ENCODE measurements at regions of chr15 and their contacts with region 1.

Region 1: DNA sequence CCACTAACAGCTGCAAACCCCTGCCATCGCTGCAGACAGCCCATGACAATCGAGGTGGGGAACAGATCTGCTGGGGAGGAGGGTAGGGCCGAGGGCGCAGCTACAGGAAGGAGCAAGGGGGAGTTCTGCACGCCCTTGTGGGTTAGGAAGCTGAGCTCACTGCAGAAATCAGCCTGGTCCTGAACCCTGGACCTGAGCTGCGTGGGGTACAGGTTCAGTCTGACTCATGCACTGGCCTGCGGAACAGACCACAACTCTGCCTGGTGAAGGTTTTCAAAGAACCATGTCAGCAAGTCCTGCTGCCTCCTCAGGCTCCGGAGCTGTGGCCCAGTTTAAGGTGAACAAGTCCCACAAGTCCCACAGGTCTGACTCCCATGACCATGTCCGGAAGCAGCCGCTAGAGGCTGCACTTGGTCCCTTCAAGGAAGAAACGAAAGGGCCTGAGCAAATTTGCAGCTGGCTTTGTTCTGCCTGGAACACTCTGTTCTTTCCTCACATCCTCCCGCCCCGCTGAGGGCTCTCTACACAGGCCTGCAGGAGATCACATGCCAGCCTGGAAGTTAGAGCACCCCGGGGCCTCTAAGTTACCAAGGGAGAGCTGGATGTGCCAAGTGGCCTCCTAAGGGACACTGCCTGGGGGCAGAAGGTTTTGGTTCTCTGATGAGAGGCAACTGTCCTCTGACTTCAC is 49.4 kb upstream of the AKAP13 start:
- DNase-seq: peak; percentile 87 to 96 (median 90)
- ATAC-seq: peak; percentile 94 to 96 (median 95)
- H3K4me3 ChIP-seq: peak overlapping the region in 5 of 12 donors; percentile 8 to 53 (median 16)
- H3K27ac ChIP-seq: peak overlapping the region; percentile 84 to 97 (median 92)
- H3K4me1 ChIP-seq: peaks cover 4 to 66% (median 38%) of the 10 kb centered on the region in 12 donors
- H3K27me3 ChIP-seq: no peaks in the 10 kb centered on the region
- CTCF ChIP-seq: peak; percentile 57 to 93 (median 83)
- POLR2A ChIP-seq: peak in 1 of 2 donors; percentile 52

Region 2: DNA sequence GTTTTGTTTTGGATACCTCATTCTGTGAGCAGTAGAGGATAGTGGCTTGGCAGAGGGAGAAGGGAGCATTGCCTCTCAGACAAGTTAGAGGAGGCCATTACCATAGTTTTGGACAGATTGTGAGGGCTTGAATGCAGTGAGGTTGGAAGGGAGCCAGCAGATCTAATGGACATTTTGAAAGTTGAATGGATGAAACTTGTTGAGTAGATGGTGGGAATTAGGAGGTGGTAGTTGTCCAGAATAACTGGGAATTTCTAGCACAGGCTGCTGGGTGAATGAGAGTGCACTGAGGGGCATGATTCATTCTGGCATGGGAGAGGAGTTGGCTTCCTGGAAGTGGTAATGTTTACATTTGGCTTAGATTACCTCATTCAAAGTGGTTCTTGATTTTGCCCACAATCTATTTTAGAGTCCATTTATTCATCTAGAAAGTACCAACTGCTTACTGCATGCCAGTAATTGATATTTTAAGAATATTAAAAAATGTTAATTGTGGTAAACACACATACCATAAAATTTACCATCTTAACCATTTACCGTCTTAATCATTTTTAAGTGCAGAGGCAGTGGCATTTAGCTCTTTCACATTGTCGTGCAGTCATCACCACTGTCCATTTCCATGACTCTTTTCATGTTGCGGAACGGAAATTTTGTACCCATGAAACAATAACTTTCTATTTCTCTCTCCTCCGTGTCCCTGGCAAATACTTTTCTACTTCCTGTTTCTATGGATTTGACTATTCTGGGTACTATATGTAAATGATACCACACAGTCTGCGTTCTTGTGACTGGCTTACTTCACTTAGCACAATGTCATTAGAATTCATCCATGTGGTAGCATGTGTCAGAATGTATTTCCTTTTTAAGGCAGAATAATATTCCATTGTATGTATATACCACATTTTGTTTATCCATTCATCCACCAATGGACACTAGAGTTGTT is 77.0 kb after region 1 on chr15:
- intact Hi-C with region 1: loop called in 4 of 10 experiments (anchors 2 to 10 kb)
- DNase-seq: peak in 1 of 5 donors; percentile 15
- ATAC-seq: peak in 3 of 4 donors; percentile 50 to 66 (median 57)
- H3K4me3 ChIP-seq: peak overlapping the region in 1 of 12 donors; percentile 16
- H3K27ac ChIP-seq: peak overlapping the region in 9 of 12 donors; percentile 15 to 86 (median 36)
- H3K4me1 ChIP-seq: peaks cover 0 to 82% (median 64%) of the 10 kb centered on the region in 12 donors
- H3K27me3 ChIP-seq: no peaks in the 10 kb centered on the region
- CTCF ChIP-seq: no peak
- POLR2A ChIP-seq: no peak

Region 3: DNA sequence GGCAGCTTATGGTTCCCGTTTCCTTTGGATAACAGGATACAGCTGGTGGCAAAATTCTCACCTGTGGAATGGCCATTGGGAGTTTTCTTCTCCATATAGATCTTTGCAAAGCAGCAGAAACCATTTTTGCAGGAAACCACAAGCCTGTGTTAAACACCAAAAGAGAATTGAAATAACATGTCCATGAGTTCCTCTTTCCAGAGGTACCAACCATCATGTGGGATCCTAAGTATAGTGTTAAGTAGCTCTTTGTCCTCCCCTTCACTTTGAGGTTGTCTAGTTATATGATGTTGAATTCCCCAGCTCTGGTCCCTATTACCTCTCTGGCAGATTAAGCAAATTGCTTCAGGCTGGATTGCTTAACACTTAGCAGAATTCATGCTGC is 144.3 kb after region 1 on chr15:
- intact Hi-C with region 1: loop called in 3 of 10 experiments (anchors 5 to 10 kb)
- DNase-seq: no peak
- ATAC-seq: peak in 1 of 4 donors; percentile 8
- H3K4me3 ChIP-seq: no peak overlapping the region
- H3K27ac ChIP-seq: no peak overlapping the region
- H3K4me1 ChIP-seq: peaks cover 3 to 88% (median 71%) of the 10 kb centered on the region in 12 donors
- H3K27me3 ChIP-seq: no peaks in the 10 kb centered on the region
- CTCF ChIP-seq: no peak
- POLR2A ChIP-seq: no peak

Region 4: DNA sequence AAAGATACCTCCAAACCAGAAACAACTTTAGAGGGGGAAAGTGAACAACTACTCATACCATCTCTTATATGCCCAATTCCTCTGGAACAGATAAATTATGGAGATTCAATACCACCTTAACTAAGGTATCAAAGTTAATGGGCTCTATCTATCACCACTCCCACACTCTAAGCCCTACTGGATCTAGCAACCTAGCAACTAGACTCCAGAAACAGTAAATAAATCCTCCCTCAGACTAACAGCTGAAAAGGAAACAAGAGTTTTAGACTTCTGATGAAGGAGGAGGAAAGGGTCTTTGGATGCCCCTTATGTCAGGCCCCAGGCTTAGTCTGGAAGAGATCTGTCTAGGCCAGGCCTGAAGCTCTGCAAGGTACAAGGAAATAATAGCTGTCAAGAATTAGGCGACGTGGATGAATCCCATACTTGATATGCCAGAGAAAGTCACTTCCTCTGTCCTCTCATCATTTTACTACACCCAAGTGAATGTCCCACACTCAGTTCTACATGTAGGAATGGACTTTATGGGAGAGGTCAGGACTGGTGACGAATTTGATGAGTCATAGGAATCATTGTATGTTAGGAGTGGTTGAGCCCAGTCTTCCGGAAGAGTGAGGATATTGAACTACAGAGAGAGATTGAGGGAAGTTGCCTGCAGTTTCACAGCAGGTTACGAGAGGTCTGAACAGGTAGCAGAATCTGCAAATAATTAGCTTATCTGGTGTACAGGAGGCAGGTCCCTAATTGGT is 163.2 kb after region 1 on chr15:
- intact Hi-C with region 1: loop called in 2 of 10 experiments (anchors 10 kb)
- DNase-seq: no peak
- ATAC-seq: peak; percentile 55 to 86 (median 84)
- H3K4me3 ChIP-seq: no peak overlapping the region
- H3K27ac ChIP-seq: peak overlapping the region in 11 of 12 donors; percentile 8 to 76 (median 60)
- H3K4me1 ChIP-seq: peaks cover 12 to 93% (median 69%) of the 10 kb centered on the region in 12 donors
- H3K27me3 ChIP-seq: no peaks in the 10 kb centered on the region
- CTCF ChIP-seq: no peak
- POLR2A ChIP-seq: no peak

Region 5: DNA sequence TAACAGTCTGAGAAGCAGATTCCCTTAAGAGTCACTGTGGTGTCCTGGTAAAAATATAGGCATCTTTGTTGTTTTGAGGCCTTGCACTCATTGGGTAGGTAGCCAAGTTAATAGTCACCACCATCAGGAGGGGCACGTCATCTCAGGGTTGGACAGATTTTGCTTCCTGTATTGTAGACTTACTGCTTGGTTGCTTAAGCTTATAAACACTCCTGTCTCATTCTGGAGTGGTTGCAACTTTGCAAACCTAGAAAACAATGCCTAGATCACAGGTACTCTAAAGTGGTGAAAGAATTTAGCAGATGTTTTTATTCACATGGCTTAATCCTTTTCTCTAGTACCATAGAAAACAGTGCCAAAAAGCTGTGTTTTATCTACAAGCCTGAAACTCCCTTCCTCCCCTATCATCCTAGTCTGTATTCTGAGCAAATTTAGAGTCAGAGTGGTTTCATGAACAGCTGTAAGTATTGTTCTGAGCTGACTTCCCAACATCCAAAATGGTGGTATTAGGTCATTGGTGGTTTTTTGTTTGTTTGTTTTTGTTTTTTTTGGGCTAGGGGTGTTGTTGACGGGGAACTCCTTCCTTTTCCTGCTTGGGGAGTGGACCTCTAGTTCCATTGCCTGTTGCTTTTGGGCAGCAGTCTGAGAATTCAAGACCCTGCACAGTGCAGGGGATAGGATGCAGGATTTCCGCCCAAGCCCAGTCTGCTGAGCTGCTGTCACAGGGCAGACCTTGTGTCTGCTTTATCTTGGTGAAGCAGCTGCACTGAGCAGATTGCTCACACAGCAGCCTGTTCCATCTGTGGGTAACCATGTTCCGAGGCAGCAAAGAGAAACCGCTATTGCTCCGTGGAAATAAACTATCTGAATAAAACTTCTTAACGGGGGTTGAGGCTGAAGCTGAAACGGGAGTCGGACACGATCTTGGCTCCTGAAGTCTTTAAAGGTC is 251.4 kb after region 1 on chr15:
- intact Hi-C with region 1: loop called in 3 of 10 experiments (anchors 5 to 10 kb)
- DNase-seq: peak; percentile 74 to 83 (median 80)
- ATAC-seq: peak; percentile 53 to 76 (median 61)
- H3K4me3 ChIP-seq: peak overlapping the region; percentile 29 to 66 (median 53)
- H3K27ac ChIP-seq: peak overlapping the region; percentile 82 to 96 (median 88)
- H3K4me1 ChIP-seq: peaks cover 17 to 96% (median 78%) of the 10 kb centered on the region in 12 donors
- H3K27me3 ChIP-seq: no peaks in the 10 kb centered on the region
- CTCF ChIP-seq: no peak
- POLR2A ChIP-seq: peak in 1 of 2 donors; percentile 50

Region 6: DNA sequence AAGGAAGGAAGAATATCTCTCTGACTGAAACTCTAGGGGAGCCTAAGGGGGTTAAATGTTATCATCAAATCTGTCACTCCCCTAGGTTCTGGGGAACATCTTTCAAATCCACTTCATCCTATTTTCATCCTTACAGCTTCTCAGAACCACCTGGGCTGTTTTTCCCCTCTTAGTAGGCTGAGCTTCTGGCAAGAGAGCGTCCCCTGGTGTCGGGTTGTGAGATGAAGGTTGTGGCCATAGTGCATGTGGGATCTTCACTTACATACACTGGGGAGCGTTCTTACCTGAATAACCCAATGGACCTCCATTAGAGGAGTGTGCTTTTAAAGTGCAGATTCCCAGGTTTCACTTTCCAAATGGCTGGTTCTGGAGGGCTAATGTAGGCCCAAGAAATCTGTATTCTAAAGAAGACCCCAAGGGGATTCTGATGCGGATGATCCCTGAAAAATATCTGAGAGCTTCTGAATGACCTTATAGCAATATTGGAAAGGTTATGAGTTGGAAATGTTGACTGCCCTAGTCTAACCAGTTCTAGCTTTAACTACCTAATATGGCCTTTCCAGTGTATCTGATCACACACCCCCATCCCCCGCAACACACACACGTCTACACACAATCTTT is 1412.3 kb after region 1 on chr15:
- intact Hi-C with region 1: no loop called
- DNase-seq: peak in 2 of 5 donors; percentile 17 to 49
- ATAC-seq: no peak
- H3K4me3 ChIP-seq: no peak overlapping the region
- H3K27ac ChIP-seq: no peak overlapping the region
- H3K4me1 ChIP-seq: no peaks in the 10 kb centered on the region
- H3K27me3 ChIP-seq: no peaks in the 10 kb centered on the region
- CTCF ChIP-seq: peak in 9 of 12 donors; percentile 30 to 56 (median 49)
- POLR2A ChIP-seq: no peak